MCF 10A (cell line): ENCODE measurements at regions of chr2 and their contacts with region 1.

Region 1: DNA sequence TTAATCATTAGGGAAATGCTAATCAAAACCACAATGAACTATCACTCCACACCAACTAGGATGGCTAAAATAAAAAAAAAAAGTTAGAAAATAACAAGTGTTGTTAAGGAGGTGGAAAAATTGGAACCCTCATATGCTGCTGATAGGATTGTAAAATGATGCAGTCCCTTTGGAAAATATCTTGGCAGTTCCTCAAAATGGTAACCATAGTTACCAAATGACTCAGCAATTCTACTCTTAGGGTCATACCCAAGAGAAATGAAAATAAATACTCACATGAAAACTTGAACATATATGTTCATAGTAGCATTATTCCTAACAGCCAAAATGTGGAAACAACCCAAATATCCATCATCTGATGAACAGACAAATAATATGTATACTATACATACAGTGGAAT is 15.7 kb upstream of the ACVR2A start:
- DNase-seq: peak; percentile 80
- H3K4me3 Mint-ChIP-seq: no peak overlapping the region
- H3K27ac Mint-ChIP-seq: no peak overlapping the region
- H3K4me1 Mint-ChIP-seq: no peaks in the 10 kb centered on the region
- H3K27me3 Mint-ChIP-seq: no peaks in the 10 kb centered on the region
- CTCF ChIP-seq: no peak

Region 2: DNA sequence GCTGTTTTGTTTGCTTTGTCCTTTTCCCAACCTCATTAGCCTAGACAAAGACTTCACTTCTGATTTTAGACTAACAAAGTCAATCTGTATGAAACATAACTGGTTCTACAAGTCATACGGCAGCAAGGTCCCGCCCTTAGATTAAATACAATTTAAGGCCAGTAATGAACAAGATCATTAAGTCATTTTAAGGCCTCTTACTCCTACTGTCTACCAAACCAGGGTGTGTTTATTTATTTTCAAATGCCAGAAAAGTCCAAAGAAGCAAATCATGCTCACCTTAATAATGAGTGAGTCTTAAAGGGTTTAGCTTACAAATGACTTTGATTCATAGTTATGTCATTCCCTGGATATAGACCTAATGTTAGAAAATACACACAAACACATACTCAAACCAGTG is 132.7 kb before region 1 on chr2:
- CTCF ChIA-PET with region 1: no interaction called
- POLR2A ChIA-PET with region 1: no interaction called
- intact Hi-C with region 1: no loop called
- DNase-seq: no peak
- H3K4me3 Mint-ChIP-seq: no peak overlapping the region
- H3K27ac Mint-ChIP-seq: no peak overlapping the region
- H3K4me1 Mint-ChIP-seq: no peaks in the 10 kb centered on the region
- H3K27me3 Mint-ChIP-seq: no peaks in the 10 kb centered on the region
- CTCF ChIP-seq: no peak

Region 3: GRCh38 chr2:147789720-147790119 is 39.4 kb before region 1 on chr2:
- CTCF ChIA-PET with region 1: no interaction called
- POLR2A ChIA-PET with region 1: no interaction called
- intact Hi-C with region 1: loop called (anchors 1 kb)
- DNase-seq: peak; percentile 9
- H3K4me3 Mint-ChIP-seq: no peak overlapping the region
- H3K27ac Mint-ChIP-seq: no peak overlapping the region
- H3K4me1 Mint-ChIP-seq: peaks cover 4% of the 10 kb centered on the region
- H3K27me3 Mint-ChIP-seq: no peaks in the 10 kb centered on the region
- CTCF ChIP-seq: no peak

Region 4: DNA sequence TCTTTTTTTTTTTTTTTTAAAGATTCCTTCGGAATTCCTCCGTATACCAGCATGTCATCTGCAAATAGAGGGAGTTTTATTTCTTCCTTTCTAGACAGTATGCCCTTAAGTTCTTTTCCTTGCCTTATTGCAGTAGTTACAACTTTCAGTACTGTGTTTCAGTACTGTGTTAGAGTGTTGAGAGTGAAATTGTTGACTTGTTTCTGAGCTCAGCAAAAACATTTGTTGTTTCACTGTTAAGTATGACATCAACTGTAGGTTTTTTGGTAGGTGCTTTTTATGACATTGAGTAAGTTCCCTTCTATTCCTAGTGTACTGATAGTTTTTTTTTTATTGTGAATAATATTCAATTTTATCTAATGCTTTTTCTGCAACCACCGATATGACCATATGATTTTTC is 59.6 kb after region 1 on chr2:
- CTCF ChIA-PET with region 1: no interaction called
- POLR2A ChIA-PET with region 1: no interaction called
- intact Hi-C with region 1: loop called (anchors 10 kb)
- DNase-seq: no peak
- H3K4me3 Mint-ChIP-seq: no peak overlapping the region
- H3K27ac Mint-ChIP-seq: no peak overlapping the region
- H3K4me1 Mint-ChIP-seq: peaks cover 12% of the 10 kb centered on the region
- H3K27me3 Mint-ChIP-seq: no peaks in the 10 kb centered on the region
- CTCF ChIP-seq: no peak